ENCODE measurements at regions of chr2 and their contacts with region 1.

Region 1: GRCh38 chr2:100610381-100610831 is 47.6 kb downstream of the PDCL3 start:
- DNase-seq: peak; percentile 83
- H3K4me3 Mint-ChIP-seq: no peak overlapping the region
- H3K27ac Mint-ChIP-seq: no peak overlapping the region
- H3K4me1 Mint-ChIP-seq: peaks cover 2% of the 10 kb centered on the region
- H3K27me3 Mint-ChIP-seq: peaks cover 6% of the 10 kb centered on the region

Region 2: GRCh38 chr2:100235098-100235497 is 375.3 kb before region 1 on chr2:
- CTCF ChIA-PET with region 1: no interaction called
- POLR2A ChIA-PET with region 1: no interaction called
- intact Hi-C with region 1: no loop called
- DNase-seq: peak; percentile 14
- H3K4me3 Mint-ChIP-seq: no peak overlapping the region
- H3K27ac Mint-ChIP-seq: no peak overlapping the region
- H3K4me1 Mint-ChIP-seq: peaks cover 10% of the 10 kb centered on the region
- H3K27me3 Mint-ChIP-seq: no peaks in the 10 kb centered on the region

Region 3: GRCh38 chr2:100588071-100588786 is 22.2 kb before region 1 on chr2:
- CTCF ChIA-PET with region 1: interaction called, 22 read pairs
- POLR2A ChIA-PET with region 1: no interaction called
- intact Hi-C with region 1: no loop called
- DNase-seq: peak; percentile 34
- H3K4me3 Mint-ChIP-seq: peak overlapping the region; percentile 5
- H3K27ac Mint-ChIP-seq: peak overlapping the region; percentile 73
- H3K4me1 Mint-ChIP-seq: peaks cover 43% of the 10 kb centered on the region
- H3K27me3 Mint-ChIP-seq: no peaks in the 10 kb centered on the region

Region 4: GRCh38 chr2:100730346-100730745 is 119.9 kb after region 1 on chr2:
- CTCF ChIA-PET with region 1: interaction called, 4 read pairs
- POLR2A ChIA-PET with region 1: no interaction called
- intact Hi-C with region 1: loop called (anchors 5 kb)
- DNase-seq: peak; percentile 65
- H3K4me3 Mint-ChIP-seq: no peak overlapping the region
- H3K27ac Mint-ChIP-seq: no peak overlapping the region
- H3K4me1 Mint-ChIP-seq: no peaks in the 10 kb centered on the region
- H3K27me3 Mint-ChIP-seq: peaks cover 12% of the 10 kb centered on the region